ENCODE measurements at regions of chr7 and their contacts with region 1.

Region 1: DNA sequence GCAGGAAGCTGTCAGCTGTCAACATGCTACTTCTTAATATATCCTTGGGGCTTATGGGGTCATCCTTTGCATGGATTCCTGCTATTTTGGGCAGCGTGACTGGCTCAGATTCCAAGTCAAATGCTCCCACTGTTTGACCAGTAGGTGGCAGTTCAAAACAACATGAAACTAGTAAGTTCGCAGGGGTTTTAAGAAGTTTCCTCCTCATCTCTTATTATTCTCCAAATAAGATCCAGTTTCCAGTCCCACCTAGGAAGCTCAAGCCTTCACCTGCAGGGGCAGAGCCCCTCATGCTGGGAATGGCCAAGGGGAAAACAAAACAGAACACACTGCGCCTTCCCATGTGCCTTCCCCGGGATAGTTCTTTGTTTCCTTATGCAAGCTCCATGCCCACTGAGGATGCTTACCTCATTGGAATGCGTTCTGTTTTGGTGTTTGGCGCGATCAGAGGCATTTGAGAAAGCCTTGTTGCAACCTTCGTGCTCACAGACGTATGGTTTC is 259.8 kb downstream of the GLI3 start:
- DNase-seq: peak; percentile 42
- H3K4me3 ChIP-seq: no peak overlapping the region
- CTCF ChIP-seq: peak; percentile 85

Region 2: GRCh38 chr7:41940760-41941343 is 36.3 kb before region 1 on chr7:
- in situ Hi-C with region 1: loop called (anchors 5 kb)
- DNase-seq: peak; percentile 59
- H3K4me3 ChIP-seq: no peak overlapping the region
- CTCF ChIP-seq: peak; percentile 85

Region 3: DNA sequence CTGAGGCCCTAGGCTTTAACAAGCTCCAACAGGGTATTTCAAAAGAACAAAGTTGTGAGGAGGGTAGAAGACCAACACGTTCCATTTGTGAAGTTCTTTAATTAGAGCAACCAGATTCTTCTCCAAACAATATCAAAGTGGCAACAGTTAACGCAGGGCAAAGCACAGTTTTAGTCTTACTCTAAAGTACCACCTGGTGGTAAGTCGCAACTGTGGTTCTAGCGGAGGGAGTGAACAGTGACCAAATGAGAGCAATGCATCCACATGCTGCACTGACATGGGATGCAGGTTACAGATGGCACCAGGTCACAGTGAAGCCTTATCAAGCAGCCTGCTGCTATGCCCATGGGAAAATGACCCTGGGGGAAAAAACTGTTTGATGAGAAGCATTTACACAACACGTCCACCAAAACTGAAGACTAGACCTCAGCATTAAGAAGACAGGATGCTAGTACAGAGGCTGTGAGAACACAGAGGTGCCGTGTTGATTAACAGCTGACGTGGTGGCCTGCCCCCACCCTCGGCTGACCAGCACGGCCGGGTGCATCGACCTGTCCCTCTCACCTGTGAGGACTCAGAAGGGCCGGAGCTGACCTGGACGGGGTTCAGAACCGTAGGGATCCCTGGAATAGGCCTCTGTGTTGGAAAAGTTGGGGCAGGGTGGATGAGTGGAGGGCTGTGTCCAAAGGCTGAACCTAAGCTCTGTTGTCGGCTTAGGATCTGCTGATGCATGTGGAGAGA is 48.6 kb after region 1 on chr7:
- in situ Hi-C with region 1: loop called (anchors 5 kb)
- DNase-seq: no peak
- H3K4me3 ChIP-seq: no peak overlapping the region
- CTCF ChIP-seq: no peak

Region 4: DNA sequence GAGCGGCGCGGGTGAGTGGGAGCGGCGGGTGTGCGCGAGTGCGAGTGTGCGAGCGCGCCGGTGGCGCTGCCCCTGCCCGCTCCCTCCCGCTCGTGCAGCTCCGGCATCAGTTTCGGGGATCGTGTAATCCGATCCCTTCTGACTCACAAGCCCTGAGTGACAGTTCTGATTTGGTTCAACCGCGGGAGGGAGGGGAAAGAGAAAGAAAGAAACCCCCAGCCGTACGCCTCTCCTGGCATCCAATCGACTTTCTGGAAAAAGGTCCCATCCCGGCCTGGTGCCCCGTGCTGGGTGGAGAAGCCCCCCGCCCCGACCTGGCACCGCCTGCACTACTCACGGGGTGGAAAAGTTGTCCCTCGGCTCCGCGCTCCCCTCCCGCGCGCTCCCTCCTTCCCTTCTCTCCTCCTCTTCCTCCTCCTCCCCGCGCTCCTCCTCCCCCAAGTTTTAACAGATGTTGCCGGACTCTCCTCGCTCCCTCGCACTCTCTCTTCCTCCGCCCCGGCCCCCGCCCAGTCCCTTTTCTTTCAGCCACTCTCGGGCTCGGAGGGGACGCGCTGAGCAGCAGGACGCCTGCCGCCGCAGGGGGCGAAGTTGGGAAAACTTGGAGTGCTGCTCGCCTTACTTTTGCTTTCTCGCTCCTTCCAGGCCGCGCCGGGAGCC is 260.1 kb after region 1 on chr7 and contains the start of gene GLI3:
- in situ Hi-C with region 1: loop called (anchors 25 kb)
- DNase-seq: peak; percentile 85
- H3K4me3 ChIP-seq: peak within 1 kb of the TSS; percentile 77
- CTCF ChIP-seq: no peak

Region 5: GRCh38 chr7:42686594-42687156 is 709.5 kb after region 1 on chr7:
- in situ Hi-C with region 1: loop called (anchors 10 kb)
- DNase-seq: no peak
- H3K4me3 ChIP-seq: no peak overlapping the region
- CTCF ChIP-seq: no peak

Region 6: GRCh38 chr7:42843205-42843800 is 866.1 kb after region 1 on chr7:
- in situ Hi-C with region 1: loop called (anchors 25 kb)
- DNase-seq: peak; percentile 13
- H3K4me3 ChIP-seq: peak overlapping the region; percentile 11
- CTCF ChIP-seq: peak; percentile 69

Region 7: DNA sequence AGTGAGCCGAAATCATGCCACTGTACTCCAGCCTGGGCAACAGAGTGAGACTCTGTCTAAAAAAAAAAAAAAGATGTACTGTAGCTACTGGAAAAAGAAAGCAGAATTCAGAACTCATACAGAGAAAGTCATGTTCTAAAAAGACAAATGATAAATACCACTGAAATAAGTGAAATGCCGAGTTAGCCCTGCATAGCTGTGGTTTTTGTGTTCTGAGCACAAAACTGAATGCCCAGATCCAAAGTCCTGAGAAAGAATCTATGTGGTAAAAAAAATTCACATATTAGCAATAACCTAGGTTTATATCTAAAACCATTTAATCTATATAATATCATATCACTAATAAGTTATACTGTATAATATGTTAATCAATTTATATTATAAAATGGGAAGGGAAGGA is 1105.9 kb after region 1 on chr7:
- in situ Hi-C with region 1: no loop called
- DNase-seq: peak; percentile 41
- H3K4me3 ChIP-seq: no peak overlapping the region
- CTCF ChIP-seq: no peak

Measured in astrocyte of the cerebellum (primary cell).